ENCODE measurements at regions of chr5 and their contacts with region 1.

Region 1: GRCh38 chr5:132426525-132427138 is 57.1 kb downstream of the SLC22A5 start:
- DNase-seq: peak; percentile 94
- ATAC-seq: peak; percentile 65
- H3K4me3 Mint-ChIP-seq: peak overlapping the region; percentile 81
- H3K27ac Mint-ChIP-seq: peak overlapping the region; percentile 98
- H3K4me1 Mint-ChIP-seq: peaks cover 99% of the 10 kb centered on the region
- H3K27me3 Mint-ChIP-seq: no peaks in the 10 kb centered on the region

Region 2: DNA sequence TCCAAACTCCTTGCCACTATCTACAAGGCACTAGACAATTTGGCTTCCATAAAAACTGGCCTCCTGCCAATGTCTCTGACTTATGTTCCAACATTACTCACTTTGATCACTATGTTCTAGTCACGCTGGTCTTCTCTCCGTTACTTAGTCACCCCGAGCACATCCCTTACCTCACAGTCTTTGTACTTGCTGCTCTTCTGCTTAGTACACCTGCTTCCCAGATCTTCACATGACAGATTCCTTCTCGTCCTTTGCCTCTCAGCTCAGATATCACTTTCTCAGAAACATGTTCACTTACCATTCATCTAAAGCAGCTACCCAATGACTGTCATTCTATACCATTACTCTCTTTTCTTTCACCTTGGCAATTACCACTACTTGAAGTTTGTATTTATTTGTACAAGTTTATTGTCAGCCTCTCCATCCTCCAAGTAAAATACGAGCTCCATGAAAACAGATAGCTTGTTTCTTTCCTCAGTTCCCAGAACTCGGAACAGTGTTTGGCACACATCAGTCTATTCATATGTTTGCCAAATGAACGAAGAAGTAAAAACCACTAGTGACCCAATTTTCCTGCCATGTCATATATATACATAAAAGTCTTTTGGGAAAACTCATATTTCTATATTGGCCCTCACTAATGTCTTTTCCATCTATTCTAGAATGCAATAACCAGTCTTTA is 63.1 kb before region 1 on chr5:
- CTCF ChIA-PET with region 1: no interaction called
- DNase-seq: no peak
- ATAC-seq: no peak
- H3K4me3 Mint-ChIP-seq: no peak overlapping the region
- H3K27ac Mint-ChIP-seq: no peak overlapping the region
- H3K4me1 Mint-ChIP-seq: no peaks in the 10 kb centered on the region
- H3K27me3 Mint-ChIP-seq: no peaks in the 10 kb centered on the region

Region 3: GRCh38 chr5:132410451-132411381 is 15.9 kb before region 1 on chr5:
- CTCF ChIA-PET with region 1: interaction called, 24 read pairs
- DNase-seq: peak; percentile 91
- ATAC-seq: peak; percentile 79
- H3K4me3 Mint-ChIP-seq: peak overlapping the region; percentile 97
- H3K27ac Mint-ChIP-seq: peak overlapping the region; percentile 99
- H3K4me1 Mint-ChIP-seq: peaks cover 58% of the 10 kb centered on the region
- H3K27me3 Mint-ChIP-seq: no peaks in the 10 kb centered on the region

Region 4: GRCh38 chr5:132456296-132457001 is 29.8 kb after region 1 on chr5:
- CTCF ChIA-PET with region 1: interaction called, 131 read pairs
- DNase-seq: peak; percentile 85
- ATAC-seq: peak; percentile 65
- H3K4me3 Mint-ChIP-seq: peak overlapping the region; percentile 54
- H3K27ac Mint-ChIP-seq: peak overlapping the region; percentile 99
- H3K4me1 Mint-ChIP-seq: peaks cover 90% of the 10 kb centered on the region
- H3K27me3 Mint-ChIP-seq: no peaks in the 10 kb centered on the region

Region 5: GRCh38 chr5:132473019-132473531 is 46.4 kb after region 1 on chr5:
- CTCF ChIA-PET with region 1: interaction called, 68 read pairs
- DNase-seq: peak; percentile 96
- ATAC-seq: peak; percentile 90
- H3K4me3 Mint-ChIP-seq: peak overlapping the region; percentile 6
- H3K27ac Mint-ChIP-seq: peak overlapping the region; percentile 89
- H3K4me1 Mint-ChIP-seq: peaks cover 91% of the 10 kb centered on the region
- H3K27me3 Mint-ChIP-seq: no peaks in the 10 kb centered on the region

Region 6: GRCh38 chr5:132490486-132491367 is 64.1 kb after region 1 on chr5 and contains the start of gene IRF1:
- CTCF ChIA-PET with region 1: interaction called, 85 read pairs
- DNase-seq: peak; percentile 98
- ATAC-seq: peak; percentile 79
- H3K4me3 Mint-ChIP-seq: peak within 1 kb of the TSS; percentile 95
- H3K27ac Mint-ChIP-seq: peak within 1 kb of the TSS; percentile 97
- H3K4me1 Mint-ChIP-seq: peaks cover 66% of the 10 kb centered on the region
- H3K27me3 Mint-ChIP-seq: no peaks in the 10 kb centered on the region
- total RNA-seq, gene IRF1: 205 to 223 TPM

Region 7: DNA sequence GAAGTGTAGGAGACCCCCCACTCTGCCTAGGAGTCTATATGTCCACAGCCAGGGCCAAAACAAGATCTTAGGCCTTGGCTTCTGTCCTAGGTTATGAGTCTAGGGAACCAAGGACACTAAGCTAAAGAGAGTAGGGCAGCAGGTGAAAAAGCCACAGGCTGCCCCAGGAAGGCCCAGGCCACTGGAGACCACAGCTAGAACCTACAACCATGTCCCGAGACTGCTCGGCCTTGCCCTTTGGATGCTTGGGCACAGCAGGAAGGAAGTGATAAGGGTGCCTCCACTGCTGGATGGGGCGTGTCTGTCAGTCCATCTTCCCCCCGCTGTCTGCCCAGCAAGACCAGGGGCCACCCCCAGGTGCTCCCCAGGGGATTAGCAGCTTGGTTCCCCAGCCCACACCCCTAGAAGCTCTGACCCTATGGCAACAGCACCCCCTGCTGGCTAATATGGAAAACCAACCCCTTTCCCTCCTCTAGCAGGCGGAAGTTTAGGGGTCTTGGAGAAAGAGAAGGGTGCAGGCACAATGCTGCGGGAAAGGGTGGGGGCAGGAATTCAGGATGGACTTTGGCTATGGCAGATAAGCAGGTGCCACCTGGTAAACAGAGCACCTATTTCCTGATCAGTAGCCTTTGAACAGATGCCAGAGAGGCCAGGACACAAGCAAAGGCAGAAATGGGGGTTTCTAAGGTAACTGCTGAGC is 74.4 kb after region 1 on chr5:
- CTCF ChIA-PET with region 1: interaction called, 27 read pairs
- DNase-seq: peak; percentile 84
- ATAC-seq: peak; percentile 25
- H3K4me3 Mint-ChIP-seq: no peak overlapping the region
- H3K27ac Mint-ChIP-seq: peak overlapping the region; percentile 67
- H3K4me1 Mint-ChIP-seq: peaks cover 43% of the 10 kb centered on the region
- H3K27me3 Mint-ChIP-seq: peaks cover 2% of the 10 kb centered on the region

Region 8: GRCh38 chr5:132557478-132558172 is 131.0 kb after region 1 on chr5:
- CTCF ChIA-PET with region 1: no interaction called
- DNase-seq: peak; percentile 63
- ATAC-seq: peak; percentile 31
- H3K4me3 Mint-ChIP-seq: peak overlapping the region; percentile 92
- H3K27ac Mint-ChIP-seq: peak overlapping the region; percentile 95
- H3K4me1 Mint-ChIP-seq: peaks cover 27% of the 10 kb centered on the region
- H3K27me3 Mint-ChIP-seq: no peaks in the 10 kb centered on the region

Measured in activated CD8-positive, alpha-beta memory T cell treated with anti-CD3 and anti-CD28 coated beads, Interleukin-2, amount 10 ng/mL, durations not matched to agents 7 days and 5 days (primary cell).